ENCODE measurements at regions of chr4 and their contacts with region 1.

Region 1: GRCh38 chr4:157700898-157701694 is 471.7 kb downstream of the GASK1B start:
- DNase-seq: no peak
- H3K4me3 ChIP-seq: no peak overlapping the region
- H3K27ac ChIP-seq: no peak overlapping the region
- H3K4me1 ChIP-seq: no peaks in the 10 kb centered on the region
- H3K27me3 ChIP-seq: no peaks in the 10 kb centered on the region
- CTCF ChIP-seq: no peak
- EP300 ChIP-seq: no peak
- POLR2A ChIP-seq: no peak

Region 2: DNA sequence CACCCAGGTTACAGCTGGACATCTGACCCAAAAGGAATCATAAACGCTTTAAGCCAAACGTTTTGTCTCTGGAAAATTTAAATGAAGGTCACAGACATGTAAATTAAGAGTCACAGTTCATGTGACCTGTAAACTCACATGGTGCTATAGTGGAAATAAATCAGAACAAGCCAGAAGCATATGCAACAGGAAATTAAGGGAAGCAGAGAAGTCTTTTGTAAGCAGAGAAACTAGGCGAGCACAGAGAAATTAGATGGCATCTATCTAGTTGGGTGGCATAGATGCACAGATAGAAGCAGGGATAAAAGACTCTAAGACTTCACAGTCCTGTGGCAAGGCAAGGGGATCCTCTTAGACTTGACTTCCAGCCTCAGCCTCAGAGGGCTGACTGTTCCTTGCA is 206.9 kb after region 1 on chr4:
- intact Hi-C with region 1: no loop called
- DNase-seq: no peak
- H3K4me3 ChIP-seq: no peak overlapping the region
- H3K27ac ChIP-seq: no peak overlapping the region
- H3K4me1 ChIP-seq: no peaks in the 10 kb centered on the region
- H3K27me3 ChIP-seq: no peaks in the 10 kb centered on the region
- CTCF ChIP-seq: no peak
- EP300 ChIP-seq: no peak
- POLR2A ChIP-seq: no peak

Region 3: DNA sequence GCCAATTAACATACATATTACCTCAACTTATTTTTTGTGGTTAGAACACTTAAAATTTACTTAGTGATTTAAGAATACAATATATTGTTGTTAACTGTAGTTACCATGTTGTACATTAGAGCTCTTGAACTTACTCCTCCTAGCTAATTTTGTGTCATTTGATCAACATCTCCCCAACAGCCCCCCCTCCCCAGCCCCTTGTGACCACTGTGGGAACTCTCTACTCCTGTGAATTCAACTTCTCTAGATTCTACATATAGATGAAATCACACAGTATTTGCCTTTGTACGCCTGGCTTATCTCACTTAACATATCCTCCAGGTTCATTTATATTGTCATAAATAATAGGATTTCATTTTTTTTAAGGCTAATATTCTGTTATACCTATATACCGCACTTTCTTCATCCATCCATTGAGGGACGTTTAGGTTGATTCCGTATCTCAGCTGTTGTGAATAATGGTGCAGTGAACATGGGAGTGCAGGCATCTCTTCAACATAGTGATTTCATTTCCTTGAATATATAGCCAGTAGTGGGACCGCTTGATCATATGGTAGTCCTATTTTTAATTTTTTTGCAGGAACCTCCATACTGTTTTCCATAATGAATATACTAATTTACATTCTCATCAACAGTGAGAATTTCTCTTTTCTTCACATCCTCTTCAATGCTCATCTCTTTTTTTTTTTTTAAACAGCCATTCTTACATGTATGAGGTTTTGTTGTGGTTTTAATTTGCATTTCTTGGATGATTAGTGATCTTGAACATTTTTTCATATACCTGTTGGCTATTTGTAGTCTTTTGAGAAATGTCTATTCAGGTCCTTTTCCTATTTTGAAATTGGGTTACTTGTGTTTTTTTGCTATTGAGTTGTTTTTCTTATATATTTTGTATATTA is 1468.6 kb after region 1 on chr4:
- intact Hi-C with region 1: loop called in 1 of 4 experiments (anchors 10 kb)
- DNase-seq: no peak
- H3K4me3 ChIP-seq: no peak overlapping the region
- H3K27ac ChIP-seq: no peak overlapping the region
- H3K4me1 ChIP-seq: peaks cover 8% of the 10 kb centered on the region
- H3K27me3 ChIP-seq: no peaks in the 10 kb centered on the region
- CTCF ChIP-seq: no peak
- EP300 ChIP-seq: no peak
- POLR2A ChIP-seq: no peak